Panc1 (cell line): ENCODE measurements at regions of chr9 and their contacts with region 1.

Region 1: GRCh38 chr9:27726244-27727081 is 153.2 kb upstream of the C9orf72 start:
- DNase-seq: peak; percentile 25
- ATAC-seq: peak; percentile 73; the same call in 1 of the 2 replicates
- H3K4me3 ChIP-seq: no peak overlapping the region; a peak in 1 of 4 replicates
- H3K27ac ChIP-seq: no peak overlapping the region
- H3K4me1 ChIP-seq: no peaks in the 10 kb centered on the region
- H3K27me3 ChIP-seq: peaks cover 2% of the 10 kb centered on the region; the same call in 1 of the 2 replicates
- CTCF ChIP-seq: peak; percentile 76

Region 2: GRCh38 chr9:28073270-28073669 is 346.8 kb after region 1 on chr9:
- CTCF ChIA-PET with region 1: no interaction called
- POLR2A ChIA-PET with region 1: no interaction called
- in situ Hi-C with region 1: no loop called
- intact Hi-C with region 1: loop called (anchors 1 kb)
- DNase-seq: no peak
- ATAC-seq: no peak
- H3K4me3 ChIP-seq: no peak overlapping the region
- H3K27ac ChIP-seq: no peak overlapping the region
- H3K4me1 ChIP-seq: no peaks in the 10 kb centered on the region
- H3K27me3 ChIP-seq: no peaks in the 10 kb centered on the region
- CTCF ChIP-seq: peak; percentile 46; the same call in 1 of the 2 replicates

Region 3: GRCh38 chr9:28774416-28775235 is 1048.2 kb after region 1 on chr9:
- CTCF ChIA-PET with region 1: no interaction called
- POLR2A ChIA-PET with region 1: no interaction called
- in situ Hi-C with region 1: no loop called
- intact Hi-C with region 1: loop called (anchors 10 kb)
- DNase-seq: no peak
- ATAC-seq: no peak
- H3K4me3 ChIP-seq: no peak overlapping the region
- H3K27ac ChIP-seq: no peak overlapping the region
- H3K4me1 ChIP-seq: no peaks in the 10 kb centered on the region
- H3K27me3 ChIP-seq: no peaks in the 10 kb centered on the region
- CTCF ChIP-seq: peak; percentile 44; the same call in 1 of the 2 replicates